Transverse colon (tissue), 4 donors: ENCODE measurements at regions of chr9 and their contacts with region 1.

Region 1: DNA sequence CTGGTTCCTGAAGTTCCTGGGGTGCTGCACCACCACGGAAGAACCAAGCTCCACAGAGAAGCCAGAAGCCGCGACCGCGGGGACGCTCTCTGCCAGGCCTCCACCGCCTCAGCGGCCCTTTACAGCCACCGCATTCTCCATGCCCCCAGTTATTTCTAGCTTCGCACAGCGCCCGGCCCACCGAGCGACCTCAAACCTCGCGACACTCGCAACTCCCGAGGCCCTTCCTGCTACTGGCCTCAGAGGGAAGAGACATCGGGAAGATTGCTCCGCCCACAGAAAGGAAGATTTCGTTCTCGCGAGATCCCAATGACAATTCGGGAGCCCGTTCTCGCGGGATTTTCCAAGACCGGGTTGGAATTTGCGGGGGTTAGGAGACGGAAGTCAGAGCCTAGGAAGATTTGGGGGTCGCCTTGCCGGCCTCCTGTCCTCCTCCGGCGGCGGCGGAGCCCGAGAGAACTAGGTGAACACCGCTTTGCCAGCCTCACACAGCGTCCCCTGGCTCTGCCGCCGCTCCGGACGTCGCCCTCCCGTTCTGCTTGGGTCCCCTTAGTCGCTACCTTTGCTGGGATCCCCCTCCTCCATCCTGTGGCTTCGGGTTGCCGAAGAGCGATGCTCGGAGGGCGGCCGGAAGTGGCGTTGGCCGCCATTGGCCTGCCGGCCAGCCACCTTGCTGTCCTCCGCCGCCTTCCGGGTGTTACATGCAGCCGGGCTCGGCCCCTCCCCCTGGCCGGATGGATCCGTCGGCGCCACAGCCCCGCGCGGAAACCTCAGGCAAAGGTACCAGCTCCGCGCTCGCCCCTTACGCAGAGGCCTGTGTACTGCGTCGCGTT is at the start of gene ERCC6L2:
- DNase-seq: peak; percentile 96
- H3K4me3 ChIP-seq: peak within 1 kb of the TSS in 1 of 4 donors; percentile 89
- H3K27ac ChIP-seq: no peak within 1 kb of the TSS
- H3K4me1 ChIP-seq: peaks cover 0 to 25% (median 15%) of the 10 kb centered on the region in 4 donors
- H3K27me3 ChIP-seq: no peaks in the 10 kb centered on the region
- CTCF ChIP-seq: peak in 2 of 5 experiments; percentile 4 to 28
- EP300 ChIP-seq: no peak
- POLR2A ChIP-seq: peak; percentile 88
- total RNA-seq, gene ERCC6L2: 62.7 to 84.6 (median 77.3) TPM

Region 2: DNA sequence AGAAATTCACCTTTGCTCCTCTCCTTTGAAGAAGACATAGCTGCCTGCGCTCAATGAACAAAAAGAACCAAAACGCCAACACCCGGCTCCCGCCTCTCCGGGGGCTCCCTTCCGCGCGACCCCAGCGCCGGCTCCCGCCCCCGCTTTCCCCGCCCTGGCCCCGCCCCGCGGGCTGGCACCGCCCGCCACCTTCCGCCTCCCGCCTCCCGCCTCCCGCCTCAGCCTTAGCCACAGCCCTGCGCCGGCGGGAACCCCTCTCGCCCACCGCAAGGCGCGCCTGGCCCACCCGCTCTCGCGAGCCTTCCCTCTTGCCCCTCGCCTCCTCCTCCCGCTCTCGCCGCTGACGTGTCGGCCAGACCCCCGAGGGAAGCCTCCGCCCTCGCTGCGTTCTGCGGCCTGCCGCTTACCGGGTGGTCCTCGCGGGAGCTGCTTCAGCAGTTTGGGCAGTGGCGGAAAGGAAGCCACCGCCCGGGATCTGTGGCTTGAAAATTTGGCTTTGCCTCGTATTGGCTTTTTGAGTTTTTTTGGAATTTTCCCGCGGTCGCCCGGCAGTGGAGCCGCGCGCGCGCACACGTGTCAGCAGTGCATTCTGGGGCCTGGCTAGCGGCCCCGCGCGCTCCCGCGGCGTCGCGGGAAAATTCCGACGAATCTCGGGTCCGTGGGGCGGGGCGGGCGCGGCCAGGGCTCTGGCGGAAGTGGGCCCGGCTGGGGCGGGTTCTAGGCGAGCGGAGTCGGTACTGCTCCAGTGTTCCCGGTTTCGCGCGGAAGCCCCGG is 558.2 kb before region 1 on chr9 and contains the start of gene FANCC:
- in situ Hi-C with region 1: no loop called
- intact Hi-C with region 1: loop called (anchors 5 kb)
- DNase-seq: peak; percentile 94
- H3K4me3 ChIP-seq: peak within 1 kb of the TSS; percentile 68 to 99 (median 90)
- H3K27ac ChIP-seq: peak within 1 kb of the TSS; percentile 94 to 99 (median 96)
- H3K4me1 ChIP-seq: peaks cover 5 to 18% (median 11%) of the 10 kb centered on the region in 4 donors
- H3K27me3 ChIP-seq: no peaks in the 10 kb centered on the region
- CTCF ChIP-seq: no peak
- EP300 ChIP-seq: no peak
- POLR2A ChIP-seq: peak; percentile 48
- total RNA-seq, gene FANCC: 4.0 to 10.3 (median 9.5) TPM

Region 3: GRCh38 chr9:95772320-95773052 is 103.0 kb before region 1 on chr9:
- in situ Hi-C with region 1: no loop called
- intact Hi-C with region 1: loop called (anchors 10 kb)
- DNase-seq: peak; percentile 79
- H3K4me3 ChIP-seq: peak overlapping the region in 2 of 4 donors; percentile 10 to 26
- H3K27ac ChIP-seq: peak overlapping the region; percentile 78 to 86 (median 84)
- H3K4me1 ChIP-seq: peaks cover 10 to 30% (median 24%) of the 10 kb centered on the region in 4 donors
- H3K27me3 ChIP-seq: no peaks in the 10 kb centered on the region
- CTCF ChIP-seq: no peak
- EP300 ChIP-seq: no peak
- POLR2A ChIP-seq: peak; percentile 17